Caco-2 (cell line): ENCODE measurements at regions of chr1 and their contacts with region 1.

Region 1: GRCh38 chr1:220370031-220370700 is 97.9 kb upstream of the RAB3GAP2 start:
- DNase-seq: no peak
- H3K4me3 ChIP-seq: no peak overlapping the region
- H3K4me3 Mint-ChIP-seq: no peak overlapping the region
- H3K27ac Mint-ChIP-seq: no peak overlapping the region
- H3K4me1 ChIP-seq: peaks cover 12% of the 10 kb centered on the region
- H3K4me1 Mint-ChIP-seq: peaks cover 13% of the 10 kb centered on the region
- H3K27me3 ChIP-seq: no peaks in the 10 kb centered on the region
- H3K27me3 Mint-ChIP-seq: peaks cover 11% of the 10 kb centered on the region
- CTCF ChIP-seq: no peak

Region 2: DNA sequence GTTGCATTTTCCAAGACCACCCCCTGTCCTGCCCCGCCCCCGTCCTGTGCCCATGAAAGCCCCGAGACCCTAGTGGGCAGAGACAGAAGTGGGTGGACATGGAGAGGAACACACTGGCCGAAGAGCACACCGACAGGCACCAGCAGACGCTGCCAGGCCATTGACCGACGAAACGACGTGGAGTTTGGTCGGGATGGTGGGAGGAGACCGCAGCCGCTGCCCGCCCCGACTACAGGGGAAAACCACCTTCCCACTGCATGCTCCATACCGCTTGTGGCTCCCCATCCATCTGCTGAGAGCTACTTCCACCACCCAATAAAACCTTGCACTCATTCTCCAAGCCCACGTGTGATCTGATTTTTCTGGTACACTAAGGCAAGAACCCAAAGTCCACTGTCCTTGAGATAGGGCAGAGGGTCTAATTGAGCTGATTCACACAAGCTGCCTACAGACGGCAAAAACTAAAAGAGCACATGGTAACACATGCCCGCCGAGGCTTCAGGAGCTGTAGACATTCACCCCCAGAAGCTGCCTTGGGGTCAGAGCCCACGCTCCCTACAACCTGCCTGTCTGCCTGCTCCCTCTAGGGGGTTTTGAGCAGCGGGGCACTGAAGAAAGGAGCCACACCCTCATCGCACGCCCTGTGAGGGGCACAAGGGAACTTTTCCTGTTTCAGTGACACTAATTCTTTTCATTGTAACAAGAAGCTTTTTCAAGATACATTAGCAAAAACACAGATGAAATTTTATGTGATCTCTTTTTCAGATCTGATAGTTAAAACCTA is 16.7 kb before region 1 on chr1:
- CTCF ChIA-PET with region 1: no interaction called
- POLR2A ChIA-PET with region 1: no interaction called
- intact Hi-C with region 1: no loop called
- DNase-seq: no peak
- H3K4me3 ChIP-seq: no peak overlapping the region
- H3K4me3 Mint-ChIP-seq: no peak overlapping the region
- H3K27ac Mint-ChIP-seq: no peak overlapping the region
- H3K4me1 ChIP-seq: no peaks in the 10 kb centered on the region
- H3K4me1 Mint-ChIP-seq: no peaks in the 10 kb centered on the region
- H3K27me3 ChIP-seq: no peaks in the 10 kb centered on the region
- H3K27me3 Mint-ChIP-seq: peaks cover 5% of the 10 kb centered on the region
- CTCF ChIP-seq: peak in 1 of 2 experiments; percentile 18

Region 3: DNA sequence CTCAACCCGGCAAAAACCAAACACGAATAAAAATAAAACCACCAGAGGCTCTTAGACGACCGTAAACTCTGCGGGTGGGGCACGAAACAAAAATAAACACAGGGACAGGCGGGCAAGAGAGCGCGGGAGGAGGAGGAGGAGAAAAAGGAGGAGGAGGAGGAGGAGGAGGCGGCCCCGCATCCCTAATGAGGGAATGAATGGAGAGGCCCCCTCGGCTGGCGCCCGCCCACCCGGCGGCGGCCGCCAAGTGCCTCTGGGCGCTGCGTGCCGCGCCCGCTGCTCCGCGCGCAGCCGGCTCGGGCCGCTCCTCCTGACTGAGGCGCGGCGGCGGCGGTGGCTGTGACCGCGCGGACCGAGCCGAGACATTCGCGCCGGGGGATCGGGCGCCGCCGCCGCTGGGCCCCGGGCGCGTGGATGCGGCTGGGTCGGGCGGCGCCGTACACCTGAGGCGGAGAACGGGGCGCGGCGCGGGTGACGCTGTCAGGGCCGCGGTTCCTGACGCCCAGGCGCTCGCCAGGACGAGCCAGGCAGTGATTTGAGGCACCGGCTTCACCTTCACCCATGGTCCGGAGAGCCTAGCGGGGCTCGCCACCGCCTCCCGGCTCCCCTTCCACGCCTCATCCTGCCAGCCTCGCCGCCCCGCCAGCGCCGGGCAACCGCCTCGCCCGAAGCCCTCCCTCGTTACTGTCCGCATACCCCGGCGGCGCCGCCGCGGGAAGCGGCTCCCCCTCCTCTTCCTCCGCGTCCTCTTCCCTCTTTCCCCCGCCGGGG is 157.9 kb after region 1 on chr1 and contains the start of gene MARK1:
- CTCF ChIA-PET with region 1: no interaction called
- POLR2A ChIA-PET with region 1: no interaction called
- intact Hi-C with region 1: loop called (anchors 5 kb)
- DNase-seq: peak in 1 of 2 experiments; percentile 43
- H3K4me3 ChIP-seq: peak within 1 kb of the TSS; percentile 55
- H3K4me3 Mint-ChIP-seq: peak within 1 kb of the TSS; percentile 86
- H3K27ac Mint-ChIP-seq: peak within 1 kb of the TSS; percentile 34
- H3K4me1 ChIP-seq: no peaks in the 10 kb centered on the region
- H3K4me1 Mint-ChIP-seq: peaks cover 8% of the 10 kb centered on the region
- H3K27me3 ChIP-seq: peaks cover 10% of the 10 kb centered on the region
- H3K27me3 Mint-ChIP-seq: peaks cover 40% of the 10 kb centered on the region
- CTCF ChIP-seq: no peak
- total RNA-seq, gene MARK1: 0.05 and 0.14 TPM in 2 replicates